Calu3 (cell line): ENCODE measurements at regions of chr5 and their contacts with region 1.

Region 1: DNA sequence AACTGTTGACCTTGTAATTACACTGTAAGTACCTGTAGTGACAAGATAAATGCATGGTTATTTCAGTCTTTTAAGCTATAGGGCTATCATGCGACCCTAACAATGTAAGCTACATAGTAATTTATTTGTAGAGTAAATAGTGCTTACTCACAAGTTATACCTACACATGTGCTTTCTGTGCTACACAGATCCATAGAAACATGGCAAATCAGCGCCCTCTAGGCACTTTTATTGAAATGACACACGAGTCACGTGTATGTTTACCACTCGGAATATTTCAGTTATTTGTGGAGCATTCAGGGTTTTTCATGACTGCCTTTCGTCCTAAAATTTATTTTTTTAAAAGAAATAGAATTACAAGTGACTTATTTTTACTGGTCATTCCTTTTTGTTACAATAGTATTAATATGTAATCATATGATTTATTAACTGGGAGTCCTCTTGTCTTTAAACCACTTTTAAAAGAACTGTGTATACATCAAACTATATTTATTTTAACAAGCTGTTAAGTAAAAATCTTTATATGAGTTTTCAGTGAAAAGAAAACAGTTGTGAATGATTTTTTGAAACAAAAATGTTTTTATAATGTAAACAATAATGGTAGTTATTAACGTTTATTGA is 1242.3 kb upstream of the WWC1 start:
- DNase-seq: peak; percentile 60
- H3K4me3 Mint-ChIP-seq: no peak overlapping the region
- H3K27ac Mint-ChIP-seq: no peak overlapping the region
- H3K4me1 Mint-ChIP-seq: no peaks in the 10 kb centered on the region
- H3K27me3 Mint-ChIP-seq: no peaks in the 10 kb centered on the region
- CTCF ChIP-seq: peak; percentile 51

Region 2: DNA sequence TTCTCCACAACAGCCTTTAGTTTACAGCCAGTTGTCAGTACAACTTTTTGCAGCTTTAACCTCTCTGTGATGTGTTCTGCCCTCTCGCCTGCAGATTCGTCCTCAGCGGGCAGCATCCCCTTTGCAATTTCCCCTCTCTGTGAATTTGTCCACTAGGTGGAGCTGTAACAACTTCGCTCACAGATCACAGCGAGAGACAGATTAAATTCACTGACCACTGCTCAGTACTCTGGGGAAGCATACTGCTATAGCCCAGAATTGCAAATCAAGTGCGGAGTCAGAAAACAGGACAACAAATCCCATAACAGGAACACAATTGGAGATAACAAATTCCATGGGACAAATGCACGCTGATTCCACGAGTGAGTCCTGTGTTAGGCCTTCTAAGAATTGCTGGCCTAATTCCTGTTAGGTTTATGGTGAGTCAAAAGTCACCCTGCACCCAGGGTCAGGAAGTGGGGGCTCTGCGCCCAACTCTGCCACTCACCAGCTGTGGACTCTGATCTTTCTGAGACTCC is 1418.8 kb before region 1 on chr5:
- CTCF ChIA-PET with region 1: no interaction called
- intact Hi-C with region 1: loop called (anchors 1 kb)
- DNase-seq: peak; percentile 75
- H3K4me3 Mint-ChIP-seq: no peak overlapping the region
- H3K27ac Mint-ChIP-seq: no peak overlapping the region
- H3K4me1 Mint-ChIP-seq: peaks cover 11% of the 10 kb centered on the region
- H3K27me3 Mint-ChIP-seq: no peaks in the 10 kb centered on the region
- CTCF ChIP-seq: peak; percentile 42

Region 3: GRCh38 chr5:166509085-166509484 is 540.1 kb before region 1 on chr5:
- CTCF ChIA-PET with region 1: no interaction called
- intact Hi-C with region 1: loop called (anchors 10 kb)
- DNase-seq: no peak
- H3K4me3 Mint-ChIP-seq: no peak overlapping the region
- H3K27ac Mint-ChIP-seq: no peak overlapping the region
- H3K4me1 Mint-ChIP-seq: no peaks in the 10 kb centered on the region
- H3K27me3 Mint-ChIP-seq: no peaks in the 10 kb centered on the region
- CTCF ChIP-seq: no peak

Region 4: DNA sequence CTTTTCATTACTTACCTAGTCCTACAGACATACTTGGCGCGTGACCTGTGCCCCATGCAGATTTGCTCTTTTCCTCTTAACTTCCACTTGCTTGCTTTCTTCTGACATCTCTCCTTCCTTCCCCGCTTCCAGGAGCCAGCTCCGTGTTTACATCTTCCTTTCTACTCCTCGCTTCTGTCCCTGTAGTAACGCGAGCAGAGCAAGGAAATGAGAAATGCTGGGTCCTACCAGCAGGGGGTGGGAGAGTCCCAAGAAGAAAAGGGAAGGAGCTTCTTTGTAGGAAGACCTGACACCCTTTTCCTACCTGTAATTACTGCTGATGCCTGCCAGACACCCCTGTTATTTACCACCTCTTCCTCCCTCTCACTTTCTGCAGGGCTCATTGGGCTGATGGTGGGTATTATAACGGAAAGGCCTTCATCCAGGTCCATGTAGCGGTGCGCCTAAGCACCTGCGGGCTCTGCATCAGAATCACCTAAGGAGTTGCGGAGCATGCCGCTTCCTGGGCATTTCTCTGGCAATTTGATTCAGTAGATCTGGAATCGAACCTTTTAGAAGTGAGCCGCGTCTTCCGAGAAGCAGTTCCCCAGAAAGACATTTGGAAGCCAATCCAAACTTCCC is 18.5 kb before region 1 on chr5:
- CTCF ChIA-PET with region 1: no interaction called
- intact Hi-C with region 1: no loop called
- DNase-seq: peak; percentile 33
- H3K4me3 Mint-ChIP-seq: no peak overlapping the region
- H3K27ac Mint-ChIP-seq: no peak overlapping the region
- H3K4me1 Mint-ChIP-seq: no peaks in the 10 kb centered on the region
- H3K27me3 Mint-ChIP-seq: no peaks in the 10 kb centered on the region
- CTCF ChIP-seq: peak; percentile 28

Region 5: GRCh38 chr5:167217097-167217743 is 168.1 kb after region 1 on chr5:
- CTCF ChIA-PET with region 1: no interaction called
- intact Hi-C with region 1: loop called (anchors 2 kb)
- DNase-seq: no peak
- H3K4me3 Mint-ChIP-seq: no peak overlapping the region
- H3K27ac Mint-ChIP-seq: no peak overlapping the region
- H3K4me1 Mint-ChIP-seq: no peaks in the 10 kb centered on the region
- H3K27me3 Mint-ChIP-seq: no peaks in the 10 kb centered on the region
- CTCF ChIP-seq: peak; percentile 18